B cell (primary cell): ENCODE measurements at regions of chr15 and their contacts with region 1.

Region 1: DNA sequence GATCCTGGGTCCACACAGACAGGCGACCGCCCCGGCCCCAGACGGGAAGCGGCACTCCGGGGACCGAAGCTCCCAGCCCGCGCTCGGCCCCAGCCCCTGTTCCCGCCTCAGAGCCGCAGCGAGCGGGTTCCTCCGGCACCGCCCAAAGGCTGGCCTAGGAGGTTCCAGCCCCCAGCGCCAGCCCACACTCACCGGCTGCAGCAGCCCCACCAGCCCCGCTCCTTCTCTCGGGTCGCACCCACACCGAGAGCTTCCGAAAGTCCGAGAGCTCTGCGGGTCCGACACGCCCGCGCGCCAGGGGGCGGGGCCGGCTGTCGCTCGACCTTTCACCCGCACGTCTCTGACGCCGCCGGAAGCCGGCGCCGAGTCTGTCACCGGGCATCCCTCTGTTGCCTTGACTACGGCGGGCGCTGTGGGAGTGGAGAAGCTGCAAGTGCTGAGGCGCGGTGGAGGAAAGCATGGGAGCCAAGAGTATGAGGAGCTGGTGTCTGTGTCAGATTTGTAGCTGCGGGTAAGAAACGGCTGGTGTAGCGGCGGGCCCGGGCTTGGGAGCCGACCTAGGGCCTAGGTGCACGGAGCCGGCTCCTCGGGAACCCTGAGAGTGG is at the starts of genes EFL1 and SAXO2:
- DNase-seq: peak; percentile 90
- ATAC-seq: peak; percentile 95
- H3K4me3 ChIP-seq: peak within 1 kb of the TSS; percentile 30 to 92 (median 75)
- H3K4me3 Mint-ChIP-seq: peak within 1 kb of the TSS; percentile 98
- H3K27ac ChIP-seq: peak within 1 kb of the TSS; percentile 38 to 78
- H3K27ac Mint-ChIP-seq: peak within 1 kb of the TSS; percentile 89
- H3K4me1 ChIP-seq: peaks cover 31 to 33% of the 10 kb centered on the region in 2 donors
- H3K4me1 Mint-ChIP-seq: peaks cover 61% of the 10 kb centered on the region
- H3K27me3 ChIP-seq: no peaks in the 10 kb centered on the region
- H3K27me3 Mint-ChIP-seq: no peaks in the 10 kb centered on the region
- CTCF ChIP-seq: no peak
- total RNA-seq, gene EFL1: 25.8 and 27.8 TPM in 2 replicates
- total RNA-seq, gene SAXO2: 25.0 and 30.2 TPM in 2 replicates

Region 2: GRCh38 chr15:81000624-81001151 is 1261.8 kb before region 1 on chr15 and contains the start of gene TLNRD1:
- CTCF ChIA-PET with region 1: no interaction called
- POLR2A ChIA-PET with region 1: no interaction called
- intact Hi-C with region 1: loop called (anchors 10 kb)
- DNase-seq: peak; percentile 93
- ATAC-seq: peak; percentile 66
- H3K4me3 ChIP-seq: peak within 1 kb of the TSS; percentile 70 to 94 (median 77)
- H3K4me3 Mint-ChIP-seq: peak within 1 kb of the TSS; percentile 98
- H3K27ac ChIP-seq: peak within 1 kb of the TSS; percentile 81 to 94
- H3K27ac Mint-ChIP-seq: peak within 1 kb of the TSS; percentile 99
- H3K4me1 ChIP-seq: peaks cover 36 to 39% of the 10 kb centered on the region in 2 donors
- H3K4me1 Mint-ChIP-seq: peaks cover 44% of the 10 kb centered on the region
- H3K27me3 ChIP-seq: no peaks in the 10 kb centered on the region
- H3K27me3 Mint-ChIP-seq: no peaks in the 10 kb centered on the region
- CTCF ChIP-seq: no peak
- total RNA-seq, gene TLNRD1: 26.5 and 26.7 TPM in 2 replicates

Region 3: DNA sequence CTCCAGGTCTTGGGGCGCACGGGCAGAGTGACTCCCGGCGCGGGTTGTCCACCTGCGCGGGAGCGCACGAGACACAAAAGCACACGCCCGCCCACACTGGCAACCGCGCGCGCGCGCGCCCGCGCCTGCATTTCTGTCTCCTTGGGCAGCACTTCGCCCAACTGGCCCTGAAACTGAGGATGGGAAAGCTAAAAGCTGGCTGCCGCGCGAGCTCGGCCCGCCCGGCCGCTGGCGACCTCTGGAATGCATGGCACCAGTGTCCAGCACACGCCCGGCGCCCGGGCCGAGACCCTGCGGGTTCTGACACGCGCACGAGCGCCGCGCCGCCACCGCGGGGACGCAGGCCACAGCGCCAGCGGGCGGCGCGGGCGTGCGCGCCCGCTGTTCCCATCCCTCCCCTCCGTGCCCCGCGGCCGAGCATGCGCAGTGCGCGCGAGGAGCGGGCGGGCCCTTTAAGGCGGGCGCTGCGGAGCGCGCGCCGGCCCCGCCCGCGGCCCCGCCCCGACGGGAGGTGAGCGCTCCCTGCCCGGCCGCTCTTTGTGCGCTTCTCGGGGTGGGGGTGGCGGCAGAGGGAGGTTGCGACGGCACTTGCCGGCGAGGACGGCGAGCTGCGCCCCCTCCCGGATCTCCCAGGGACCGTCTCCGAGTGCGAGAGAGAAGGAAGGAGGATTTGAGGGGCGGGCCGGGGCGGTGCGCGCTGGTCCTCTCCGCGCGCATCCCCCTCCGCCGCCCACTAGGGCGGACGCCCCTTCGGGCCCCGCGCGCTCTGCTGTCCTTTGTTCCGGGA is 215.7 kb before region 1 on chr15:
- CTCF ChIA-PET with region 1: no interaction called
- POLR2A ChIA-PET with region 1: no interaction called
- intact Hi-C with region 1: loop called (anchors 2 kb)
- DNase-seq: peak; percentile 90
- ATAC-seq: peak; percentile 79
- H3K4me3 ChIP-seq: peak overlapping the region; percentile 68 to 87 (median 84)
- H3K4me3 Mint-ChIP-seq: peak overlapping the region; percentile 92
- H3K27ac ChIP-seq: peak overlapping the region; percentile 65 to 77
- H3K27ac Mint-ChIP-seq: peak overlapping the region; percentile 56
- H3K4me1 ChIP-seq: peaks cover 19 to 28% of the 10 kb centered on the region in 2 donors
- H3K4me1 Mint-ChIP-seq: peaks cover 20% of the 10 kb centered on the region
- H3K27me3 ChIP-seq: peaks cover 0 to 29% (median 15%) of the 10 kb centered on the region in 4 experiments
- H3K27me3 Mint-ChIP-seq: peaks cover 35% of the 10 kb centered on the region
- CTCF ChIP-seq: peak; percentile 49

Region 4: DNA sequence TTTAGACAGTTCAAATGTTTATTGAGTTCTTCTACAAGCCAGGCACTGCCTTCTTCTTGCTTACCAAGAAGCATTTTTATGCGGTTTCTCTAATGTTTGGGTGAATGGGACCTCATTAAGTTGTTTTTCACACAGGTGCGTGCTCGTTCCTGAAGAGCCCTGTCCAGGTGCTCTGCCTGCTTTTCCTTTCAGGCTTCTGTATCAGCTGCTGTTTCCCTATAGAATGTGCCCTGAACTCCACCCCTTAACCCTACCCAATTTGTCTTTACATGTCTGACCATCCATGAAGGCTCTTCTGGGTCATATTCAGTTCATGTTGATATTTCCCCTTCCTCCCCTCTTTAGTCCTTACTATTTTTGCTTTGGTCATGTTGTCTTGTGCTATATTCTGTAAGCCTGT is 109.1 kb after region 1 on chr15:
- CTCF ChIA-PET with region 1: no interaction called
- POLR2A ChIA-PET with region 1: no interaction called
- intact Hi-C with region 1: no loop called
- DNase-seq: no peak
- ATAC-seq: no peak
- H3K4me3 ChIP-seq: no peak overlapping the region
- H3K4me3 Mint-ChIP-seq: no peak overlapping the region
- H3K27ac ChIP-seq: no peak overlapping the region
- H3K27ac Mint-ChIP-seq: no peak overlapping the region
- H3K4me1 ChIP-seq: peaks cover 0 to 5% of the 10 kb centered on the region in 2 donors
- H3K4me1 Mint-ChIP-seq: peaks cover 6% of the 10 kb centered on the region
- H3K27me3 ChIP-seq: no peaks in the 10 kb centered on the region
- H3K27me3 Mint-ChIP-seq: no peaks in the 10 kb centered on the region
- CTCF ChIP-seq: no peak